ENCODE measurements at regions of chr22 and their contacts with region 1.

Region 1: GRCh38 chr22:46613606-46614021 is 6.6 kb upstream of the GRAMD4 start:
- DNase-seq: peak; percentile 64
- H3K4me3 Mint-ChIP-seq: peak overlapping the region; percentile 85
- H3K27ac Mint-ChIP-seq: peak overlapping the region; percentile 91
- H3K4me1 Mint-ChIP-seq: peaks cover 26% of the 10 kb centered on the region
- H3K27me3 Mint-ChIP-seq: no peaks in the 10 kb centered on the region

Region 2: GRCh38 chr22:46335201-46336118 is 278.2 kb before region 1 on chr22 and contains the start of gene TRMU:
- CTCF ChIA-PET with region 1: no interaction called
- intact Hi-C with region 1: no loop called
- DNase-seq: peak; percentile 74
- H3K4me3 Mint-ChIP-seq: peak within 1 kb of the TSS; percentile 93
- H3K27ac Mint-ChIP-seq: peak within 1 kb of the TSS; percentile 85
- H3K4me1 Mint-ChIP-seq: peaks cover 32% of the 10 kb centered on the region
- H3K27me3 Mint-ChIP-seq: no peaks in the 10 kb centered on the region
- total RNA-seq, gene TRMU: 57.4 TPM

Region 3: GRCh38 chr22:46576556-46577367 is 36.9 kb before region 1 on chr22:
- CTCF ChIA-PET with region 1: no interaction called
- intact Hi-C with region 1: no loop called
- DNase-seq: peak; percentile 28
- H3K4me3 Mint-ChIP-seq: peak overlapping the region; percentile 76
- H3K27ac Mint-ChIP-seq: no peak overlapping the region
- H3K4me1 Mint-ChIP-seq: peaks cover 24% of the 10 kb centered on the region
- H3K27me3 Mint-ChIP-seq: no peaks in the 10 kb centered on the region

Region 4: DNA sequence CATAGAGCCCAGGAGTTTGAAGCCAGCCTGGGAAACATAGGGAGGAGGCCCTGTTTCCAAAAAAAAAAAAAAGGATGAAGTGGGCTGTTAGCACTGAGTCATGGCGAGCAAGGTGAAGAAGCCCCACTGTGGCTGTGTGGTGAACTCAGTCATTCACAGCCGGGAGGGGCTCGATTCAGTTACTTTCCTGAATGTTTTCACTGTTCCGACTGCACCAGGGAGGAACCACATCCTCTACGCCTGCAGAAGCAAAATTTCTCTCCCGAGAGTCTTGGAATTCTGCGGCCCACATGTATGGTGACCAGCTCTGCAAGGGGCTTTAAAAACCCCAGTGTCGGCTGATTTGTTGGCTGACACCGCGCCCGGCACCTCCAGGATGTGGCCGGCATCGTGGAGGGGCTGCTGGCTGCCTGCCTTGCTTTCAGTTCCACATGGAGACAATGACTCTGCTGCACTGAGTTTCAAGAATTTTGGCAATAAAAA is 21.2 kb before region 1 on chr22:
- CTCF ChIA-PET with region 1: no interaction called
- intact Hi-C with region 1: loop called (anchors 1 kb)
- DNase-seq: peak; percentile 72
- H3K4me3 Mint-ChIP-seq: peak overlapping the region; percentile 36
- H3K27ac Mint-ChIP-seq: peak overlapping the region; percentile 46
- H3K4me1 Mint-ChIP-seq: peaks cover 24% of the 10 kb centered on the region
- H3K27me3 Mint-ChIP-seq: no peaks in the 10 kb centered on the region

Region 5: DNA sequence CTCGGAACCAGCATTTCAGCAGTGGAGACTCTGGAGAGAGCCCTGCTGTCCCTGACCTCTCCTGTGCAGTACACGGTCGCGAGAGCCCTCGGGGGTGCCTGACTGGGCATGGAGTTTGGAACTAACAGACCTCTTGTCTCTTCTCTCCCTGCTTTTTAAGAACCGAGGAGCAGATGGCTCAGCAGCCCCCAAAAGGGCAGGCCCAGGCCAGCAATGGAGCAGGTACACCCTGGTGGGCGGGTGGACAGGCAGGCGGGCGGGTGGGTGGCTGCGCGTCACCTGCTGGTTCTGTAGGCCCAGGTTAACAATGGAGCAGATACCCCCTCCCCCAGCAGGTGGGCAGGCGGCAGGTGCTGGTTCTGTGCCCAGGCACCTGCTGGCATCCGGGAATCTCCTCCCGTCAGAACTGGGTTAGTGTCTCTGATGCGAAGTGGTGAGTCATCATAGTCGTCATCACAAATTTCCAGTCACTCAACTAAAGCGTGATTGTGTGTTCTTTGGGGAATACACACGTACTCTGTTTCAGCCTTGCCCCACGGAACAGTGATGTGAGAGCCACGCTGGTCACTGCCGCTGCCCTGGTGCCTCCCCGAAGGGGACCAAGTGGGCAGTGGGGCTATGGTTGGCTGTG is 47.7 kb after region 1 on chr22:
- CTCF ChIA-PET with region 1: no interaction called
- intact Hi-C with region 1: loop called (anchors 2 kb)
- DNase-seq: peak; percentile 77
- H3K4me3 Mint-ChIP-seq: no peak overlapping the region
- H3K27ac Mint-ChIP-seq: peak overlapping the region; percentile 81
- H3K4me1 Mint-ChIP-seq: peaks cover 22% of the 10 kb centered on the region
- H3K27me3 Mint-ChIP-seq: no peaks in the 10 kb centered on the region

Region 6: GRCh38 chr22:46762238-46763050 is 148.8 kb after region 1 on chr22 and contains the start of gene TBC1D22A:
- CTCF ChIA-PET with region 1: no interaction called
- intact Hi-C with region 1: loop called (anchors 1 kb)
- DNase-seq: peak; percentile 97
- H3K4me3 Mint-ChIP-seq: peak within 1 kb of the TSS; percentile 99
- H3K27ac Mint-ChIP-seq: peak within 1 kb of the TSS; percentile 98
- H3K4me1 Mint-ChIP-seq: peaks cover 53% of the 10 kb centered on the region
- H3K27me3 Mint-ChIP-seq: no peaks in the 10 kb centered on the region
- total RNA-seq, gene TBC1D22A: 20.1 to 21.4 TPM

Region 7: DNA sequence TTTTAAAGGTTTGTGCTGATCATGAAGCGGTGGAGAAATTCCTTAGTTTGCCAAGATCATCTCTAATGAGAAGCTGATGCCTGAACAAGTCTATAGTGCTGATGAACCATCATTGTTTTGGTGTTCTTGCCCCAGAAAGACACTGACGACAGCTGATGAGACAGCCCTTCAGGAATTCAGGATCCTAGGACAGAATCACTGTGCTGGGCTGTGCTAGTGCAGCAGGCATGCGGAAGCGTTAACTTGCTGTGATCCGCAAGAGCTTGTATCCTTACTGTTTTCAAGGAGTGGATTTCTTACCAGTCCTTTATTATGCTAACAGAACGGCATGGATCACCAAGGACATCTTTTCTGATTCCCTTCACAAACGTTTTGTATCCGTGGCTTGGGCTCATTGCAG is 253.0 kb after region 1 on chr22:
- CTCF ChIA-PET with region 1: no interaction called
- intact Hi-C with region 1: no loop called
- DNase-seq: no peak
- H3K4me3 Mint-ChIP-seq: no peak overlapping the region
- H3K27ac Mint-ChIP-seq: no peak overlapping the region
- H3K4me1 Mint-ChIP-seq: peaks cover 3% of the 10 kb centered on the region
- H3K27me3 Mint-ChIP-seq: no peaks in the 10 kb centered on the region